ENCODE measurements at regions of chr10 and their contacts with region 1.

Region 1: GRCh38 chr10:99659031-99659867 is at the start of gene ENTPD7:
- DNase-seq: peak; percentile 97
- H3K4me3 Mint-ChIP-seq: peak within 1 kb of the TSS; percentile 83
- H3K27ac Mint-ChIP-seq: peak within 1 kb of the TSS; percentile 80
- H3K4me1 Mint-ChIP-seq: peaks cover 59% of the 10 kb centered on the region
- H3K27me3 Mint-ChIP-seq: no peaks in the 10 kb centered on the region
- CTCF ChIP-seq: peak; percentile 27
- total RNA-seq, gene ENTPD7: 18.3 and 29.0 TPM in 2 replicates

Region 2: DNA sequence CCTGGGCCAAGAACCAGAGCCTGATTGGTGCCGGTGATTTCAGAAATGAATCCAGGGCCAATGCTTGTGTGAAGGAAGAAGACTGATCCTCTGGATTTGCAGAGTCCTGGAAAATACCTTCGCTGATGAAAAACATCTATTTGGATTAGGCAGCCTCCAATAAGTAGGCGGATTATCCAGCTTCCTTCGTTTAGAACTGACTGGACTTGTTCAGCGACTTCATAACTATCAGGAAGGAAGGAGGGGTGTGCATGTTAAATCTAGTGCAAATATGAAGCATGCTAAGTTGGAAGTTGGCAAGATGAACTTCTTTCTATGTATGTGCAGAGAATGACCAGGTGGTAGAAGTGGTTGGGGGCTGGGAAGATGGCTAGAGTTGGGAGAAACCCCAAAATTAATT is 85.5 kb before region 1 on chr10:
- CTCF ChIA-PET with region 1: no interaction called
- POLR2A ChIA-PET with region 1: no interaction called
- intact Hi-C with region 1: no loop called
- DNase-seq: no peak
- H3K4me3 Mint-ChIP-seq: no peak overlapping the region
- H3K27ac Mint-ChIP-seq: no peak overlapping the region
- H3K4me1 Mint-ChIP-seq: no peaks in the 10 kb centered on the region
- H3K27me3 Mint-ChIP-seq: peaks cover 21% of the 10 kb centered on the region
- CTCF ChIP-seq: no peak

Region 3: DNA sequence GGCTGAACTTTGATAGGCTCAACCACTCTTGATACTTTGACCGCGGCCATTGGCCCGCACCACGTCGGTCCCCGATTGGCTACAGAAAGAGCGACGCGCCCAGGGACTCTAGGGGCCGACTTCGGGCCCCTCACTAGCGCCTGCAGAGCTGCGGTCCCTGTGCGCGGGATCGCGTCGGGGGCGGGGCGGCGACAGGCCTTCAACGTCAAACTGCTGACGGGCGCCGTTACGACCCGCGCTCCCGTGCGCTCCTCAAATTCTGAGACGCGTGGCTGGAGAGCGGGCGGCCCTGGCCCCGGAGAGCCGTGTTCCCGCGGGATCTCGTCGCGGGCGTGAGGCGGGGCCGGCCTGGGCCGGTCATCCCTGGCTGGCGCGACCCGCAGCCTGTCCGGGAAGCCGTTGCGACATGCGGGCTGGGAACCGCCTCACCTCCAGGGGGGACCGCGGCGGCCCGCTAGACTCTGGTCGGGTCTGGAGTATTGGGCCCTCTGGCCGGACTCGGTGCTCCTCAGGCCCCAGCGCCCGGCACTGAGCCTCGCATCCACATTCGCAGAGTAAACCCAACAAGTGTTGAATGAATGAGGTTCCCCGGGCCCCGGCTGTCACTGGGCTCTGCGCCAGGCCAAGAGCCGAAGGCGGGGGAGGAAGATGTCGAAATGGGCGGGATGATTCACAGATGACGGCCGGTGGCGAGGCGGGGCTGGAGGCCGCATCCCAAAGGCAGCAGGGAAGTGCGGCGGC is 38.4 kb before region 1 on chr10:
- CTCF ChIA-PET with region 1: interaction called, 6 read pairs
- POLR2A ChIA-PET with region 1: interaction called, 335 read pairs
- intact Hi-C with region 1: loop called (anchors 2 kb)
- DNase-seq: peak; percentile 95
- H3K4me3 Mint-ChIP-seq: peak overlapping the region; percentile 78
- H3K27ac Mint-ChIP-seq: peak overlapping the region; percentile 98
- H3K4me1 Mint-ChIP-seq: peaks cover 32% of the 10 kb centered on the region
- H3K27me3 Mint-ChIP-seq: no peaks in the 10 kb centered on the region
- CTCF ChIP-seq: no peak

Region 4: DNA sequence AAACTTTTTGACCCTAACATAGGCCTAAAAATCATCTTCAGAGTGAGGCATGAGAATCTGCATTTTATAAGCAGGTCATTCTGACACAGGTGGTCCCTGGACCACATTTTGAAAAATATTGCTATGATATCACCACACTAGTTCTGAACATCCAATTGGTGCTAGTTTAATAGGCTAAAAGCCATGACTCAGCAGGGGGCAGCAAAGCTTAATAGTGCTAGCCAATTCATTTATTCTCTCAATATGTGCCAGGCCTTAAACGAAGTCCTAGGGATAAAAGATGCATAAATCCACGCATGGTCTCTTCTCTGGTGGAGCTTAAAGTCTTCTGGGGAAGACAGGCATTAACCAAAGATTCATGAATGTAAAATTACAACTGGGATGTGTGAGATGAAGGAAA is 28.8 kb before region 1 on chr10:
- CTCF ChIA-PET with region 1: interaction called, 18 read pairs
- POLR2A ChIA-PET with region 1: interaction called, 31 read pairs
- intact Hi-C with region 1: no loop called
- DNase-seq: peak; percentile 73
- H3K4me3 Mint-ChIP-seq: no peak overlapping the region
- H3K27ac Mint-ChIP-seq: no peak overlapping the region
- H3K4me1 Mint-ChIP-seq: peaks cover 6% of the 10 kb centered on the region
- H3K27me3 Mint-ChIP-seq: no peaks in the 10 kb centered on the region
- CTCF ChIP-seq: peak; percentile 63

Region 5: GRCh38 chr10:99676426-99676825 is 17.2 kb after region 1 on chr10:
- CTCF ChIA-PET with region 1: interaction called, 3 read pairs
- POLR2A ChIA-PET with region 1: interaction called, 69 read pairs
- intact Hi-C with region 1: loop called (anchors 1 kb)
- DNase-seq: no peak
- H3K4me3 Mint-ChIP-seq: no peak overlapping the region
- H3K27ac Mint-ChIP-seq: no peak overlapping the region
- H3K4me1 Mint-ChIP-seq: peaks cover under 1% of the 10 kb centered on the region
- H3K27me3 Mint-ChIP-seq: no peaks in the 10 kb centered on the region
- CTCF ChIP-seq: no peak

Region 6: GRCh38 chr10:99685597-99685967 is 26.3 kb after region 1 on chr10:
- CTCF ChIA-PET with region 1: interaction called, 4 read pairs
- POLR2A ChIA-PET with region 1: interaction called, 69 read pairs
- intact Hi-C with region 1: loop called (anchors 1 kb)
- DNase-seq: peak; percentile 11
- H3K4me3 Mint-ChIP-seq: no peak overlapping the region
- H3K27ac Mint-ChIP-seq: peak overlapping the region; percentile 88
- H3K4me1 Mint-ChIP-seq: peaks cover 27% of the 10 kb centered on the region
- H3K27me3 Mint-ChIP-seq: no peaks in the 10 kb centered on the region
- CTCF ChIP-seq: no peak

Region 7: DNA sequence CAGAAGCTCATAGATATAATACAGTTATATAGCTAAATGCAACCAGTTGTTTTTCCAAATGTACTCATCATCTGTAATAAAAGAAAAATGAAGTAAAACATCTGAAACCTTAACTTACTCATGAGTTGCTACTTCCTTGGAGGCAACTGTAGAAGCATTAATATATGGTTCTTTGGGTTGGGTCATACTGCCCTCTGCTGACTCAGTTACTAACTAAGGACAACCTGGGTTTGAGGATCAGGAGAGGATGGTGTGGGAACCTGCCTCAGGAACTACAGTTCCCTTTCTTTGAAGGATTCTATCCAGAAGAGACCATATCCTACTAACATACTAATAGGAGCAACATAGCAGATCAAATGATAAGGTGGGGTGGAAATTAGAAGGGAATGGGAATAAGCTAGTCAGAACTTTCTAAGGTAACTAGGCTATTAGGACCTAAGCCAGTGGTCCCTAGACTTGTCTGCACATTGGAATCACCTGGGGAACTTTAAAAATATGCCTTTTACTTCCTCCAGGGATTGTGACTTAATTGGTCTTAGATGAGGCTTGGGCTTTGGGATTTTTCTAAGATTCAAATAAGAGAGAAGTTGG is 52.0 kb after region 1 on chr10:
- CTCF ChIA-PET with region 1: interaction called, 7 read pairs
- POLR2A ChIA-PET with region 1: interaction called, 13 read pairs
- intact Hi-C with region 1: no loop called
- DNase-seq: peak; percentile 65
- H3K4me3 Mint-ChIP-seq: no peak overlapping the region
- H3K27ac Mint-ChIP-seq: peak overlapping the region; percentile 2
- H3K4me1 Mint-ChIP-seq: peaks cover 8% of the 10 kb centered on the region
- H3K27me3 Mint-ChIP-seq: no peaks in the 10 kb centered on the region
- CTCF ChIP-seq: peak; percentile 53

Measured in MCF 10A (cell line).